ENCODE measurements at regions of chr3 and their contacts with region 1.

Region 1: DNA sequence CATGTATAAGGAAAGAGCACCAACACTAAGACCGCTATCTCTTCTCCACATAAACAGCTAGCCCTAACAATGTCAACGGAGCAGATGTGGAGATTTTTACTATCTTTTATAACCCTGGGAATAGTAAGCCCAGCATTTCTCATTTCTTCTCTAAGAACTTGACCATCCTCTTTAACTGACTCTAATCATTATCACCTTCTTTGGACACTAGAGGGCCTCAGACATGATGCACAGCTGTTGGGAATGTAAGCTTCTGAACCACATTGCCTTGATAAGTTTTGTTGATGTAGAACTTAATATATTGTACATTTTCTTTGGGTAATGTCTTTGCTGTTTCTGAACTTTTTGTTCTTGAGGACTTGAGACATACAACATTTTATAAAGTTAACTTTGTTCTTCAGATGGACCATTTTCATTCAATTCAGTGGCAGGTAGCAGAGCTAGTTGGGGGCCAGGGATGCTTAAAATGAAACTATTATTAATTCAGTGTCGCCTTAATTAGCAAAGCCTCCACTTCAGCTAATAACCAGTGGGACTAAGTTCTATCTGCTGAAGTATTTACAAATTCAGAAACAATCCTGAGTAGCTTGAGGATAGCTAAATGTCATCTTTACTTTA is 9.6 kb upstream of the TAGLN3 start:
- DNase-seq: no peak
- ATAC-seq: peak; percentile 51 to 85 (median 70)
- H3K4me3 ChIP-seq: no peak overlapping the region
- H3K27ac ChIP-seq: no peak overlapping the region
- H3K4me1 ChIP-seq: peaks cover 0 to 6% (median 0%) of the 10 kb centered on the region in 12 donors
- H3K27me3 ChIP-seq: no peaks in the 10 kb centered on the region
- CTCF ChIP-seq: peak; percentile 47 to 81 (median 62)
- POLR2A ChIP-seq: no peak

Region 2: GRCh38 chr3:112007633-112008032 is 18.5 kb after region 1 on chr3:
- intact Hi-C with region 1: loop called in 2 of 10 experiments (anchors 2 kb)
- DNase-seq: peak in 1 of 5 donors; percentile 32
- ATAC-seq: no peak
- H3K4me3 ChIP-seq: no peak overlapping the region
- H3K27ac ChIP-seq: no peak overlapping the region
- H3K4me1 ChIP-seq: peaks cover 0 to 35% (median 14%) of the 10 kb centered on the region in 12 donors
- H3K27me3 ChIP-seq: no peaks in the 10 kb centered on the region
- CTCF ChIP-seq: no peak
- POLR2A ChIP-seq: no peak

Region 3: GRCh38 chr3:112043603-112044201 is 54.5 kb after region 1 on chr3:
- intact Hi-C with region 1: loop called in 6 of 10 experiments (anchors 1 to 5 kb)
- DNase-seq: peak in 4 of 5 donors; percentile 37 to 47 (median 38)
- ATAC-seq: peak; percentile 88 to 97 (median 91)
- H3K4me3 ChIP-seq: peak overlapping the region in 1 of 12 donors; percentile 7
- H3K27ac ChIP-seq: no peak overlapping the region
- H3K4me1 ChIP-seq: peaks cover 0 to 8% (median 0%) of the 10 kb centered on the region in 12 donors
- H3K27me3 ChIP-seq: no peaks in the 10 kb centered on the region
- CTCF ChIP-seq: peak; percentile 81 to 97 (median 90)
- POLR2A ChIP-seq: no peak